A673 (cell line): ENCODE measurements at regions of chr7 and their contacts with region 1.

Region 1: GRCh38 chr7:34373940-34374339 is 284.1 kb upstream of the NPSR1 start:
- DNase-seq: no peak
- H3K4me3 ChIP-seq: no peak overlapping the region
- H3K27ac ChIP-seq: no peak overlapping the region
- H3K4me1 ChIP-seq: no peaks in the 10 kb centered on the region
- H3K27me3 ChIP-seq: no peaks in the 10 kb centered on the region
- CTCF ChIP-seq: no peak

Region 2: GRCh38 chr7:34396437-34397065 is 22.6 kb after region 1 on chr7:
- CTCF ChIA-PET with region 1: no interaction called
- POLR2A ChIA-PET with region 1: no interaction called
- intact Hi-C with region 1: loop called (anchors 2 kb)
- DNase-seq: no peak
- H3K4me3 ChIP-seq: no peak overlapping the region
- H3K27ac ChIP-seq: no peak overlapping the region
- H3K4me1 ChIP-seq: no peaks in the 10 kb centered on the region
- H3K27me3 ChIP-seq: no peaks in the 10 kb centered on the region
- CTCF ChIP-seq: no peak

Region 3: DNA sequence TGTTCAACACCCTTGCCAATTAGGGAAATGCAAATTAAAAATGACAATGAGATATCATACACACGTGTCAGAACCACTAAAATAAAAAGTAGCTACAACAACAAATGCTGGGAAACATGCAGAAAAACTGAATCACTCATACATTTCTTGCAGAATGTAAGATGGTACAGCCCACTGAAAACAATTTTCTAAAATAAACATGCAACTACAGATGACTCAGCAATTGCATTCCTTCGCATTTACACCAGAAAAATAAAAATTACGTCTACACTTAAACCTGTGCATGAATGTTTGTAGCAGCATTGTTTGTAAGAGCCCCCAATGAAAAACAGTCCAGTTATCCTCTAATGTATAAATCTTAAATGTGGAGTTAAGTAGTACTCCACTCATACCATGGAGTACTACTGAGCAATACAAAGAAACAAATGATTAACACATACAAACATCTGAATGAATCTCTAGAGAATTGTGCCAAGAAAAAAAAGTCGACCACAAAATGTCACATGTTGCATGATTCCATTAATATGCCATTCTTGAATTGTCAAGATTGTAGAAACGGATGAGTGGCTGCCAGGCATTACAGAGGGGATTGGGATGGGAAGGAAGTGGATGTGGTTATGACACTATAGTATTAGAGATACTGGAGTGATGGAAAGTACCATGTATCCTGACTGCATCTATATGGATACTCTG is 149.4 kb after region 1 on chr7:
- CTCF ChIA-PET with region 1: no interaction called
- POLR2A ChIA-PET with region 1: no interaction called
- intact Hi-C with region 1: no loop called
- DNase-seq: peak; percentile 8
- H3K4me3 ChIP-seq: no peak overlapping the region
- H3K27ac ChIP-seq: no peak overlapping the region
- H3K4me1 ChIP-seq: no peaks in the 10 kb centered on the region
- H3K27me3 ChIP-seq: no peaks in the 10 kb centered on the region
- CTCF ChIP-seq: no peak